B cell (primary cell): ENCODE measurements at regions of chr14 and their contacts with region 1.

Region 1: GRCh38 chr14:87944987-87945604 is 47.9 kb downstream of the GALC start:
- DNase-seq: peak; percentile 68
- ATAC-seq: peak; percentile 58
- H3K4me3 ChIP-seq: no peak overlapping the region
- H3K4me3 Mint-ChIP-seq: no peak overlapping the region
- H3K27ac ChIP-seq: no peak overlapping the region
- H3K27ac Mint-ChIP-seq: no peak overlapping the region
- H3K4me1 ChIP-seq: no peaks in the 10 kb centered on the region
- H3K4me1 Mint-ChIP-seq: no peaks in the 10 kb centered on the region
- H3K27me3 ChIP-seq: no peaks in the 10 kb centered on the region
- H3K27me3 Mint-ChIP-seq: no peaks in the 10 kb centered on the region
- CTCF ChIP-seq: peak; percentile 89

Region 2: DNA sequence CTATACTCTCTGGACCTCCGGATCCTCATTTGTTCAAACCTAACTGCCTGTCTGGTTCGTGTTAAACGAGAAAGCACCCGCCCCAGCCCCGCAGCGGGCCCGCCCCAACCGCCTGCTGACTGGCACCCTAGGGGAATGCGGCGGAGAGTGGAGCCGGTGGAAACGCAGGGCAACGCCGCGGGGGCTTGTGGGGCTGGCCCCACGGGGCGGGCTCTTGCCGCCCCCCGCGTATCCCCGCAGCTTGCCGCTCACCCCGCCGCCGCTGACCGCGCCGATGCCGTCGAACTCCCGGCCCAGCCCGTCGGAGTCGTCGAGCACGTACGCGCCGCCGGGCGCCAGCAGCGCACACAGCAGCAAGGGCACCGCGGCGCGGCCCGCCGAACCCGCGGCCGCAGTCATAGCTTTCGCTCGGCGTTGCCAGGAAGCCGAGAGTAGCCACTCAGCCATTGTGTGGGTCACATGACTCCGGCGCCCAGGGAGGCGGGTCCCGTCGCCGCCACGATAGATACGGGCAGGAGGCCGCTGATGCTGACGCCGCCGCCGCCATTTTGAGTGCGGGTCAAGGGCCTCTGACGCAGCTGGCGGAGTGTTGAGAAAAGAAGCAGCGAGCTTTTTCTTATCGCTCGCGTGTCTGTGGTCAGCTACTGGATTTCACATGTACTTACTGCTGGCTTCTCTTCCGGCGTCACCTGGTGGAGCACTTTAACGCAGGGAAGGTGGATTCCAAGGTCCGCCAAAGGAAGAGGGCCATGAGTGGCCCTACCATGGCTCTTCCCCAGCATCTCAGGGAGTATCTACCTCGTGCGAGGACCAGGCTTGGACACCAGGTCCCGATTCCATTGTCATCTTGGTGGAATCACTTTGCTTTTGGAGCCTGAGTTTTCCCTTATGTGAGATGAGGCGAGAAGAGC is 47.9 kb after region 1 on chr14 and contains the start of gene GALC:
- CTCF ChIA-PET with region 1: interaction called, 18 read pairs
- POLR2A ChIA-PET with region 1: no interaction called
- intact Hi-C with region 1: loop called (anchors 5 kb)
- DNase-seq: peak; percentile 97
- ATAC-seq: peak; percentile 82
- H3K4me3 ChIP-seq: peak within 1 kb of the TSS; percentile 47 to 74 (median 66)
- H3K4me3 Mint-ChIP-seq: peak within 1 kb of the TSS; percentile 87
- H3K27ac ChIP-seq: peak within 1 kb of the TSS; percentile 95 to 97
- H3K27ac Mint-ChIP-seq: peak within 1 kb of the TSS; percentile 99
- H3K4me1 ChIP-seq: peaks cover 15 to 29% of the 10 kb centered on the region in 2 donors
- H3K4me1 Mint-ChIP-seq: peaks cover 38% of the 10 kb centered on the region
- H3K27me3 ChIP-seq: no peaks in the 10 kb centered on the region
- H3K27me3 Mint-ChIP-seq: no peaks in the 10 kb centered on the region
- CTCF ChIP-seq: no peak
- total RNA-seq, gene GALC: 15.6 and 17.8 TPM in 2 replicates

Region 3: GRCh38 chr14:88168498-88169165 is 223.5 kb after region 1 on chr14:
- CTCF ChIA-PET with region 1: interaction called, 149 read pairs
- POLR2A ChIA-PET with region 1: no interaction called
- intact Hi-C with region 1: loop called (anchors 1 kb)
- DNase-seq: peak; percentile 66
- ATAC-seq: peak; percentile 75
- H3K4me3 ChIP-seq: no peak overlapping the region
- H3K4me3 Mint-ChIP-seq: no peak overlapping the region
- H3K27ac ChIP-seq: no peak overlapping the region
- H3K27ac Mint-ChIP-seq: no peak overlapping the region
- H3K4me1 ChIP-seq: no peaks in the 10 kb centered on the region
- H3K4me1 Mint-ChIP-seq: no peaks in the 10 kb centered on the region
- H3K27me3 ChIP-seq: peaks cover 0 to 21% (median 2%) of the 10 kb centered on the region in 4 experiments
- H3K27me3 Mint-ChIP-seq: peaks cover 42% of the 10 kb centered on the region
- CTCF ChIP-seq: peak; percentile 76

Region 4: GRCh38 chr14:88195676-88196075 is 250.6 kb after region 1 on chr14:
- CTCF ChIA-PET with region 1: interaction called, 61 read pairs
- POLR2A ChIA-PET with region 1: no interaction called
- intact Hi-C with region 1: no loop called
- DNase-seq: no peak
- ATAC-seq: no peak
- H3K4me3 ChIP-seq: no peak overlapping the region
- H3K4me3 Mint-ChIP-seq: no peak overlapping the region
- H3K27ac ChIP-seq: no peak overlapping the region
- H3K27ac Mint-ChIP-seq: no peak overlapping the region
- H3K4me1 ChIP-seq: no peaks in the 10 kb centered on the region
- H3K4me1 Mint-ChIP-seq: no peaks in the 10 kb centered on the region
- H3K27me3 ChIP-seq: peaks cover 0 to 9% (median 4%) of the 10 kb centered on the region in 4 experiments
- H3K27me3 Mint-ChIP-seq: peaks cover 26% of the 10 kb centered on the region
- CTCF ChIP-seq: no peak

Region 5: GRCh38 chr14:88380405-88380804 is 435.3 kb after region 1 on chr14:
- CTCF ChIA-PET with region 1: interaction called, 17 read pairs
- POLR2A ChIA-PET with region 1: no interaction called
- intact Hi-C with region 1: loop called (anchors 5 kb)
- DNase-seq: no peak
- ATAC-seq: no peak
- H3K4me3 ChIP-seq: no peak overlapping the region
- H3K4me3 Mint-ChIP-seq: no peak overlapping the region
- H3K27ac ChIP-seq: no peak overlapping the region
- H3K27ac Mint-ChIP-seq: no peak overlapping the region
- H3K4me1 ChIP-seq: peaks cover 0 to 4% of the 10 kb centered on the region in 2 donors
- H3K4me1 Mint-ChIP-seq: peaks cover 9% of the 10 kb centered on the region
- H3K27me3 ChIP-seq: peaks cover 0 to 4% (median 0%) of the 10 kb centered on the region in 4 experiments
- H3K27me3 Mint-ChIP-seq: peaks cover 13% of the 10 kb centered on the region
- CTCF ChIP-seq: no peak

Region 6: GRCh38 chr14:88492272-88493089 is 547.4 kb after region 1 on chr14:
- CTCF ChIA-PET with region 1: interaction called, 4 read pairs
- POLR2A ChIA-PET with region 1: no interaction called
- intact Hi-C with region 1: loop called (anchors 10 kb)
- DNase-seq: peak; percentile 74
- ATAC-seq: peak; percentile 79
- H3K4me3 ChIP-seq: no peak overlapping the region
- H3K4me3 Mint-ChIP-seq: no peak overlapping the region
- H3K27ac ChIP-seq: no peak overlapping the region
- H3K27ac Mint-ChIP-seq: no peak overlapping the region
- H3K4me1 ChIP-seq: no peaks in the 10 kb centered on the region
- H3K4me1 Mint-ChIP-seq: peaks cover 4% of the 10 kb centered on the region
- H3K27me3 ChIP-seq: no peaks in the 10 kb centered on the region
- H3K27me3 Mint-ChIP-seq: no peaks in the 10 kb centered on the region
- CTCF ChIP-seq: peak; percentile 85